HepG2 (cell line): ENCODE measurements at regions of chr2 and their contacts with region 1.

Region 1: GRCh38 chr2:215418064-215418963 is 17.6 kb downstream of the FN1 start:
- DNase-seq: peak; percentile 89
- ATAC-seq: peak; percentile 42
- H3K4me3 ChIP-seq: peak overlapping the region; percentile 3 to 31 (median 13); a peak in 2 of 6 replicates
- H3K27ac ChIP-seq: peak overlapping the region; percentile 77
- H3K4me1 ChIP-seq: peaks cover 100% of the 10 kb centered on the region
- H3K27me3 ChIP-seq: no peaks in the 10 kb centered on the region
- CTCF ChIP-seq: no peak
- EP300 ChIP-seq: peak; percentile 45 to 94; a peak in 3 of 4 replicates
- POLR2A ChIP-seq: peak in 1 of 2 experiments; percentile 28; a peak in 1 of 4 replicates
- RAD21 ChIP-seq: no peak

Region 2: GRCh38 chr2:215188078-215188477 is 230.2 kb before region 1 on chr2:
- CTCF ChIA-PET with region 1: no interaction called
- POLR2A ChIA-PET with region 1: no interaction called
- in situ Hi-C with region 1: no loop called
- intact Hi-C with region 1: no loop called
- DNase-seq: no peak
- ATAC-seq: no peak
- H3K4me3 ChIP-seq: no peak overlapping the region
- H3K27ac ChIP-seq: no peak overlapping the region
- H3K4me1 ChIP-seq: no peaks in the 10 kb centered on the region
- H3K27me3 ChIP-seq: peaks cover 0 to 1% of the 10 kb centered on the region in 2 experiments; a peak in 1 of 5 replicates
- CTCF ChIP-seq: no peak
- EP300 ChIP-seq: no peak
- POLR2A ChIP-seq: no peak
- RAD21 ChIP-seq: no peak

Region 3: GRCh38 chr2:215430528-215431187 is 12.3 kb after region 1 on chr2:
- CTCF ChIA-PET with region 1: no interaction called
- POLR2A ChIA-PET with region 1: interaction called, 118 read pairs
- in situ Hi-C with region 1: no loop called
- intact Hi-C with region 1: loop called (anchors 2 kb)
- DNase-seq: no peak
- ATAC-seq: peak; percentile 3; the same call in 1 of the 3 replicates
- H3K4me3 ChIP-seq: peak overlapping the region; percentile 1 to 99 (median 64); a peak in 3 of 6 replicates
- H3K27ac ChIP-seq: peak overlapping the region; percentile 33
- H3K4me1 ChIP-seq: peaks cover 78% of the 10 kb centered on the region
- H3K27me3 ChIP-seq: no peaks in the 10 kb centered on the region; a peak in 1 of 5 replicates
- CTCF ChIP-seq: no peak
- EP300 ChIP-seq: no peak
- POLR2A ChIP-seq: peak in 1 of 2 experiments; percentile 9; a peak in 1 of 4 replicates
- RAD21 ChIP-seq: no peak

Region 4: GRCh38 chr2:215435809-215436704 is 17.7 kb after region 1 on chr2 and contains the start of gene FN1:
- CTCF ChIA-PET with region 1: no interaction called
- POLR2A ChIA-PET with region 1: interaction called, 118 read pairs
- in situ Hi-C with region 1: no loop called
- intact Hi-C with region 1: loop called (anchors 2 kb)
- DNase-seq: peak; percentile 91
- ATAC-seq: peak; percentile 92
- H3K4me3 ChIP-seq: peak within 1 kb of the TSS; percentile 86 to 99 (median 95)
- H3K27ac ChIP-seq: peak within 1 kb of the TSS; percentile 71
- H3K4me1 ChIP-seq: peaks cover 71% of the 10 kb centered on the region
- H3K27me3 ChIP-seq: no peaks in the 10 kb centered on the region; a peak in 1 of 5 replicates
- CTCF ChIP-seq: no peak
- EP300 ChIP-seq: peak in 1 of 2 experiments; percentile 27; a peak in 1 of 4 replicates
- POLR2A ChIP-seq: peak; percentile 97 to 99
- RAD21 ChIP-seq: no peak; the same call in 1 of the 2 replicates
- total RNA-seq, gene FN1: 1,029 and 1,847 TPM in 2 replicates

Region 5: GRCh38 chr2:215487005-215487378 is 68.7 kb after region 1 on chr2:
- CTCF ChIA-PET with region 1: no interaction called
- POLR2A ChIA-PET with region 1: no interaction called
- in situ Hi-C with region 1: no loop called
- intact Hi-C with region 1: no loop called
- DNase-seq: no peak
- ATAC-seq: no peak
- H3K4me3 ChIP-seq: no peak overlapping the region
- H3K27ac ChIP-seq: no peak overlapping the region
- H3K4me1 ChIP-seq: no peaks in the 10 kb centered on the region
- H3K27me3 ChIP-seq: no peaks in the 10 kb centered on the region
- CTCF ChIP-seq: no peak
- EP300 ChIP-seq: no peak
- POLR2A ChIP-seq: no peak
- RAD21 ChIP-seq: no peak